Activated CD8-positive, alpha-beta T cell treated with anti-CD3 and anti-CD28 coated beads for 36 hours (primary cell): ENCODE measurements at regions of chr20 and their contacts with region 1.

Region 1: DNA sequence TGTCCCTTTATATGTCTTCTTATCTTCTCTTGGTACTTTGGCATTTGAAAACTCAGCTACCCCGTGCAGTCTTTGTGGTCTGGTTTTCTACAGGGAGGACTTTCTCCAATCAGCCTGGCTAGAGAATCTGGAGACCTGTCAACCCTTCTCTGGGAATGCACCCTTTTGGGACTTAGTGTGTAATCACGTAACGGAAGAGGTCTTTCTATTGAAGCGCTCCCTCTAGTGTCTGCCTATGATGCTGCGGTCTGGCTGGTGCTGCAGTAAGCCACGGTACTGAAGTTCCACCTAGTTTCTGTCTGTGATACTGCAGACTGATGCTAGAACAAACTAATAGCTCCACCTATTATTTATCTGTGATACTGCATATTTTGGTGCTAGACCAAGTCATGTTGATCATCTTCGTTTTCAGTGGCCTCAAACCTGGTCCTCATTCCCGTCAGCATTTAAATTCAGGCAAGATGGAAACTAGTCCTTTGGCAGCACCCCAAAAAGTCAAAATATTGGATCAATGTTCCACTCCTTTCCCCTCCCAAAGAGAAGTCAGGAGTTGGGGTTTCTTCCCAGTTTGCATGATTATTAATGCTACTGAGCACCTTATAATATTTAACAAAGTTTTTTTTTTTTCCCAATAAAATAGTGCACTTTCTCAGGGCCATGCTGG is 12.5 kb upstream of the SIRPB2 start:
- DNase-seq: peak; percentile 89
- ATAC-seq: peak; percentile 100
- H3K4me3 Mint-ChIP-seq: no peak overlapping the region
- H3K27ac Mint-ChIP-seq: no peak overlapping the region
- H3K4me1 Mint-ChIP-seq: peaks cover 4% of the 10 kb centered on the region
- H3K27me3 Mint-ChIP-seq: peaks cover 26% of the 10 kb centered on the region
- CTCF ChIP-seq: peak; percentile 99

Region 2: GRCh38 chr20:1450926-1451491 is 52.7 kb before region 1 on chr20:
- CTCF ChIA-PET with region 1: interaction called, 11 read pairs
- POLR2A ChIA-PET with region 1: no interaction called
- intact Hi-C with region 1: no loop called
- DNase-seq: no peak
- ATAC-seq: no peak
- H3K4me3 Mint-ChIP-seq: no peak overlapping the region
- H3K27ac Mint-ChIP-seq: no peak overlapping the region
- H3K4me1 Mint-ChIP-seq: peaks cover under 1% of the 10 kb centered on the region
- H3K27me3 Mint-ChIP-seq: no peaks in the 10 kb centered on the region
- CTCF ChIP-seq: no peak

Region 3: DNA sequence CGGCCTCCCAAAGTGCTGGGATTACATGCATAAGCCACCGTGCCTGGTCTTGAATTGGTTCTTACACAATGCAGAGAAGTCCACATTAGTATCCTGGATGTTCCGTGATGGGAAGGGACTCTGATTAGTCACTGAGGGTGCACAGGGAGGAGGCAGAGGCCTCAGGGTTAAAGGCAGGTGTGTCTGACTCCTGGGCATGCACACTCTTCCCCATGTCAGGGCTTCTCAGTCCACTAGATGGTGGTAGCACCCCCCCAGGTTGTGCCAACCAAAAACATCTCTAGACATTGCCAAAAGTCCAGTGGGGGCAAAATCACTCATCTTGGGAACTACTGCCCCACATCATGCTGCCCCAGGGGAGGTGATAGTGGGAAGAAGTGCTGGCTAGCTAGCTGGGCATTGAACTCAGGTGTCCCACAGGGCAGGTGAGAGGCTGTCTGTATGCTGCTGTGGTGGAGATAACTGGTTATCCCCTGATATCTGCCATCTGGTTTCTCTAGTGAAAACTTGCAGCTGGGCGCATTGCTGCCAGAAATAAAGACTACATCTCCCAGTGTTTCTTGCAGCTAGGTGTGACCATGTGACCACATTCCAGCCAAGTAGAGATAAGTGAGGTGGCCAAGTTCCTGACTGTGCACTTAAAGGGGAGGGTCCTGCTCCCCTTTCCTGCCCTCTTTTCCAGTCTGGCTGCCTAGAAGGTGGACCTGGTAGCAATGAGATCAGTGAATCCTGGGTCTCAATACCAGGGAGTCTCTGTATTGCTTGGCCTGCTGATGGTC is 28.7 kb before region 1 on chr20:
- CTCF ChIA-PET with region 1: interaction called, 22 read pairs
- POLR2A ChIA-PET with region 1: no interaction called
- intact Hi-C with region 1: no loop called
- DNase-seq: peak; percentile 16
- ATAC-seq: peak; percentile 39
- H3K4me3 Mint-ChIP-seq: no peak overlapping the region
- H3K27ac Mint-ChIP-seq: no peak overlapping the region
- H3K4me1 Mint-ChIP-seq: no peaks in the 10 kb centered on the region
- H3K27me3 Mint-ChIP-seq: peaks cover 3% of the 10 kb centered on the region
- CTCF ChIP-seq: peak; percentile 29

Region 4: DNA sequence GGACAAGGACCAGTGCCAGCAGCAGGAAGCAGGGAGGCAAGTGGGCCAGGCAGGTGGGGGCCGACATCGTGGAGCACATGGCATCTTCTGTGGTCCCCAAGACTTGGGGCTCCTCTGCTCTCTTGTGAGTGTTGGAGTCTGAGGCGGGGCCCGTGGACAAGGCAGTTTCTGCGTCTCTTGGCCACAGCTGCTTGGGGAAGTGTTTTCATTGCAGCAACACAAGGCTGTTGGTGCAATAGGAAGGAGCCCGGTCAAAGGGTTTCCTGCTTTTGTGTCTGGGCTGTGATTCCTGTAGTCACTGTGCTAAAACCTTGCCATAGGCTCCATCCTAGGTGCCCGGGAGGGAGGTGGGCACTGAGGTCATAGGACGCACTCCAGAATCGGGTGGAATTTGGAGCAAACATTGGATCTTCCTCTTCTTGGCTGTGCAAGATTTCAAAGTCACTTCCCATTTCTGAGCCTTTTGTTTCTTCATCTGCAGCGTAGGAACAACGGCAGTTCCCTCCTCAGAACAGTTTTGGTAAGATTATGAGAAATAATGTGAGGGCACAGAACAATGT is 12.3 kb before region 1 on chr20 and contains the start of gene SIRPB2:
- CTCF ChIA-PET with region 1: interaction called, 21 read pairs
- POLR2A ChIA-PET with region 1: interaction called, 3 read pairs
- intact Hi-C with region 1: no loop called
- DNase-seq: no peak
- ATAC-seq: no peak
- H3K4me3 Mint-ChIP-seq: no peak within 1 kb of the TSS
- H3K27ac Mint-ChIP-seq: no peak within 1 kb of the TSS
- H3K4me1 Mint-ChIP-seq: peaks cover 12% of the 10 kb centered on the region
- H3K27me3 Mint-ChIP-seq: peaks cover 20% of the 10 kb centered on the region
- CTCF ChIP-seq: no peak
- total RNA-seq, gene SIRPB2: not detected

Region 5: GRCh38 chr20:1535420-1536175 is 31.9 kb after region 1 on chr20:
- CTCF ChIA-PET with region 1: interaction called, 17 read pairs
- POLR2A ChIA-PET with region 1: no interaction called
- intact Hi-C with region 1: no loop called
- DNase-seq: no peak
- ATAC-seq: no peak
- H3K4me3 Mint-ChIP-seq: no peak overlapping the region
- H3K27ac Mint-ChIP-seq: no peak overlapping the region
- H3K4me1 Mint-ChIP-seq: peaks cover 11% of the 10 kb centered on the region
- H3K27me3 Mint-ChIP-seq: no peaks in the 10 kb centered on the region
- CTCF ChIP-seq: no peak

Region 6: DNA sequence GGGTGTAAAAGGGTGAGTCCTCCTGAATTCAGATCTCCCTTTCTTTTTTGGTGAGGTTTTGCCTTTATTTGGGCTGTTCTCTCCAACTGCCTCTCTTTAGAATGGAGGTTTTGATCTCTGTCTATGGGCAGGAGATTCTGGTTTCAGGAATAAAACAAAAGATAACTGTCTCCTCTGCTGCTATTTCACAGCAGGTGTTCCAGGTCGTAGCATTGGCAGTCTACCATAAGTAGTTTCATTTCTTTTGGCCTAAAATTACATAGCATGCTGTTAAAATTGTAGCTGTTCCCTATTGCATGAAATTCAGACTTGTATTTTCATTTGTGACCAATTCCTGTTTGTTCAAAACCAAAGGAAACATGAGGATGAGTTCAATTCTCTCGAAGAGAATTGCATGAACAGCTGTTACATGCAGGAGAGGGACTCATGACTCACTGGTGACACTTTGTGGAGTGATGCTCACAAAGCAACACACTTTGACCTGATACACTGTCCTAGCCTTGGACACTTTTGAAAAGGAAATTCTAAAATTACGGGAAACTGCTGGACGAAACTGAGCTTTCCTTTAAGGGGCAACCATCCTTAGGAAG is 230.7 kb after region 1 on chr20:
- CTCF ChIA-PET with region 1: interaction called, 31 read pairs
- POLR2A ChIA-PET with region 1: interaction called, 3 read pairs
- intact Hi-C with region 1: loop called (anchors 10 kb)
- DNase-seq: peak; percentile 41
- ATAC-seq: peak; percentile 88
- H3K4me3 Mint-ChIP-seq: no peak overlapping the region
- H3K27ac Mint-ChIP-seq: no peak overlapping the region
- H3K4me1 Mint-ChIP-seq: peaks cover 40% of the 10 kb centered on the region
- H3K27me3 Mint-ChIP-seq: no peaks in the 10 kb centered on the region
- CTCF ChIP-seq: peak; percentile 45